OCI-LY7 (cell line): ENCODE measurements at regions of chr11 and their contacts with region 1.

Region 1: GRCh38 chr11:72585762-72586311 is 88.4 kb downstream of the PDE2A start:
- DNase-seq: peak; percentile 81
- H3K4me3 ChIP-seq: no peak overlapping the region
- H3K27ac ChIP-seq: no peak overlapping the region
- H3K4me1 ChIP-seq: peaks cover 1% of the 10 kb centered on the region
- CTCF ChIP-seq: peak; percentile 89

Region 2: GRCh38 chr11:72497731-72498130 is 88.1 kb before region 1 on chr11:
- CTCF ChIA-PET with region 1: no interaction called
- POLR2A ChIA-PET with region 1: no interaction called
- intact Hi-C with region 1: no loop called
- DNase-seq: no peak
- H3K4me3 ChIP-seq: no peak overlapping the region
- H3K27ac ChIP-seq: no peak overlapping the region
- H3K4me1 ChIP-seq: no peaks in the 10 kb centered on the region
- CTCF ChIP-seq: no peak

Region 3: DNA sequence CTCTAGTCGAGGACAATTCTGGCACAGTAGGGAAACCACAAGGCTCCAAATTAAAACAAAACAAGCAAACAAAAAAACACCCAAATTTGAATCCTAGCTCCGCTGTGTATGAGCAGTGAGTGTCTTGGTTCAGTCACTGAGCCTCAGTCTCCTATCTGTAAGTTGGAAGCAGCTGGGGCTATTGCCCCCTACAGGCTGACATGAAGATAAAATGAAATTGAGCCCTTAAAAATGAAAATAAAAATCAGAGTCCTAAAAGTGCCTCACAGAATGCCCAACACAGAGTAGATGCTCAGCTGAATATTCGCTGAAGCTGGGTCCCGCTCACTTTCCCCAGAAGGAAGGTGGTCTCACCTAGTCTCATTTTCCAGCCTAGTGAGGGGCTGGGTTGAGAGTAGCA is 23.2 kb after region 1 on chr11:
- CTCF ChIA-PET with region 1: no interaction called
- POLR2A ChIA-PET with region 1: no interaction called
- intact Hi-C with region 1: loop called (anchors 1 kb)
- DNase-seq: peak; percentile 52
- H3K4me3 ChIP-seq: no peak overlapping the region
- H3K27ac ChIP-seq: no peak overlapping the region
- H3K4me1 ChIP-seq: peaks cover 5% of the 10 kb centered on the region
- CTCF ChIP-seq: peak; percentile 82

Region 4: DNA sequence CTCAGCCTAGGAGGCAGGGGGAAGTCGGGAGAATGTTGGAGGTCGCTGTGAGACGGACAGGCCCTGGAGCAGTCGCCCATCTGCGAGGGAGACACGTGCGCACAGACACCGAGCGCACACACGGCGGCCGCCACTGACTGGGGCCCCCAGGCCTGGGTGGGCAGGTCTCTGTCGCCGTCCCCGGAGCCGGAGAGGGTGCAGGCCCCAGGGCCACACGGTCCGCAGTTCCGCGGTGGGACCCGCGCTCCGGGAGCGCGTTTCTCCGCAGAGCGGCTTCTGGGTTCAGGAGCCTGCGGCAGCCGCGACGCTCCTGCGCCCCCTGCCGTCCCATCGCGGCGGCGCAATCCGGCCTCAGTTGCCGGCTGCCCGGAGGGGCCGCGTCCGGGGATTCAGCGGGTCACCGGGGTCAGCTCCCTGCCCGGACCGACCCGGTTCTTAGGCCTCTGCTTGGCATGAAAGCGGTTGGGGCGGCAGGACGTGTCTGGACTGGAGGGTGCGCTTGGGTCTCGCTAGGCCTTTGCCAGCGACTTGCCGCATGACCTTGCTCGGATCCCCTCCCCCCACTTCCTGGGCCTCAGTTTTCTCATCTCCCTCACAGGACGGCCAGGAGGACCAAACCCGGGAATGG is 57.2 kb after region 1 on chr11:
- CTCF ChIA-PET with region 1: interaction called, 3 read pairs
- POLR2A ChIA-PET with region 1: no interaction called
- intact Hi-C with region 1: loop called (anchors 1 kb)
- DNase-seq: peak; percentile 59
- H3K4me3 ChIP-seq: peak overlapping the region; percentile 31
- H3K27ac ChIP-seq: no peak overlapping the region
- H3K4me1 ChIP-seq: no peaks in the 10 kb centered on the region
- CTCF ChIP-seq: peak; percentile 84

Region 5: DNA sequence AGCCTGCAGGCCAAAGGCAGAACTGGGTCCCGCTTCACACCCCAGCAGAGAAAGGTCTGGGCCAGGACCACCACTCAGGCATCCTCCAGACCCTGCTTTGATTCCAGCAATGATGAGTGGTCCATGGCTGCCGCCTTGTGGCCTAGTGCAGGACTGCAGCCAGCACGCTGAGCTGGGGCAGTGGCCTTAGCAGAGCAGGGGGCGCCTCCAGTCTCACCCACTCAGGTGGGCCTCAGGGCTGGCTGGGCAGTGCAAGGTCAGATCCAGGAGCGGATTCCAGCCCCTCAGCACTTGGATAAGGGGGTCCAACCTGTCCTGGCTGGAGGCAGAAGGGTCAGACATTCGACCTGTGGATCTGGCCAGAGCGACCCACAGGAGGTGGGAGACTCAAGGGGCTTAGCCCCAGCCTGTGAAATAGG is 98.0 kb after region 1 on chr11:
- CTCF ChIA-PET with region 1: interaction called, 3 read pairs
- POLR2A ChIA-PET with region 1: no interaction called
- intact Hi-C with region 1: loop called (anchors 2 kb)
- DNase-seq: peak; percentile 68
- H3K4me3 ChIP-seq: no peak overlapping the region
- H3K27ac ChIP-seq: no peak overlapping the region
- H3K4me1 ChIP-seq: no peaks in the 10 kb centered on the region
- CTCF ChIP-seq: peak; percentile 88

Region 6: GRCh38 chr11:72814286-72815109 is 228.7 kb after region 1 on chr11 and contains the start of gene ATG16L2:
- CTCF ChIA-PET with region 1: no interaction called
- POLR2A ChIA-PET with region 1: no interaction called
- intact Hi-C with region 1: loop called (anchors 10 kb)
- DNase-seq: peak; percentile 91
- H3K4me3 ChIP-seq: peak within 1 kb of the TSS; percentile 84
- H3K27ac ChIP-seq: peak within 1 kb of the TSS; percentile 91
- H3K4me1 ChIP-seq: peaks cover 27% of the 10 kb centered on the region
- CTCF ChIP-seq: peak; percentile 60
- total RNA-seq, gene ATG16L2: 99.1 and 103 TPM in 2 replicates